ENCODE measurements at regions of chr4 and their contacts with region 1.

Region 1: GRCh38 chr4:81471588-81472288 is at the start of gene RASGEF1B:
- DNase-seq: peak; percentile 93
- H3K4me3 Mint-ChIP-seq: peak within 1 kb of the TSS; percentile 86
- H3K27ac Mint-ChIP-seq: peak within 1 kb of the TSS; percentile 91
- H3K4me1 Mint-ChIP-seq: peaks cover 31% of the 10 kb centered on the region
- H3K27me3 Mint-ChIP-seq: no peaks in the 10 kb centered on the region
- total RNA-seq, gene RASGEF1B: 6.5 to 6.7 TPM

Region 2: DNA sequence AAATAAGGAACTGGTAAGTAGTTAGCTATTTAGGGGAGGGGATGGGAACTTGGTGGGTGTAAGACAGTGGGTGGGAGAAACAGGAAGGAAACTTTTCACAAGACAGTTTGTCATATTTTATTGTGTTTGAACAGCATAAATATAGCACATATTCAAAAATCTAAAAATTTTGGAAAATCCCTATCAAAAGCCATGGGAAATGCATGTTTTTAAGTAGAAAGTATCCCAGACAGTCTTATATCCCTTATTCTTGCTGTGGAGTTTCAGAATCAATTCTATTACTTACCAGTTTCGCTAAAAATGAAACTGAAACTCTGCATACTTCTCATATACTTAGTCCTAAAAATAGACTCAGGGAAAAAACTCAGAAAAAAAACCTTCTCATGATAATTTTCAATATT is 22.3 kb after region 1 on chr4:
- CTCF ChIA-PET with region 1: interaction called, 6 read pairs
- intact Hi-C with region 1: loop called (anchors 1 kb)
- DNase-seq: no peak
- H3K4me3 Mint-ChIP-seq: no peak overlapping the region
- H3K27ac Mint-ChIP-seq: peak overlapping the region; percentile 30
- H3K4me1 Mint-ChIP-seq: peaks cover 46% of the 10 kb centered on the region
- H3K27me3 Mint-ChIP-seq: no peaks in the 10 kb centered on the region

Region 3: GRCh38 chr4:81589262-81589661 is 117.5 kb after region 1 on chr4:
- CTCF ChIA-PET with region 1: no interaction called
- intact Hi-C with region 1: loop called (anchors 2 kb)
- DNase-seq: no peak
- H3K4me3 Mint-ChIP-seq: no peak overlapping the region
- H3K27ac Mint-ChIP-seq: no peak overlapping the region
- H3K4me1 Mint-ChIP-seq: peaks cover 19% of the 10 kb centered on the region
- H3K27me3 Mint-ChIP-seq: no peaks in the 10 kb centered on the region

Region 4: DNA sequence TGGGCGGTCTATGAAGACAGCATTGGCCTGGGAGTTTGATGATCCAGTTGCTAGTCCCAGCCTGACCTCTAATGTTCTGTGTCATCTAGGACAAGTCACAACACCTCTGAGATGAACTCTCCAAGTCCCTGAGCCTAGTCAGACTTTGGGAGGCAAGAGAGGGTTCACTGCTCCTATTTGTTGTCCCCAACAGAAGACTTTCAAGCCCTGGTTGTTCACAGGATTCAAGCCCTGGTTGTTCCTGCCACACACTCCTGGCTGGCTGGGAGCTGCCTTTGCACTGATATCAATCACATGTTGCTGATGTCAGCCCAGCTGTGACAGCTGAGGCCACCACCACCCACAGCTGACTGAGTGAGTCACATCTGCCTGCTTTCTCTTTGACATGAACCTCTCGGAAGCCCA is 253.2 kb after region 1 on chr4:
- CTCF ChIA-PET with region 1: interaction called, 3 read pairs
- intact Hi-C with region 1: loop called (anchors 2 kb)
- DNase-seq: peak; percentile 78
- H3K4me3 Mint-ChIP-seq: no peak overlapping the region
- H3K27ac Mint-ChIP-seq: no peak overlapping the region
- H3K4me1 Mint-ChIP-seq: peaks cover 14% of the 10 kb centered on the region
- H3K27me3 Mint-ChIP-seq: no peaks in the 10 kb centered on the region

Region 5: DNA sequence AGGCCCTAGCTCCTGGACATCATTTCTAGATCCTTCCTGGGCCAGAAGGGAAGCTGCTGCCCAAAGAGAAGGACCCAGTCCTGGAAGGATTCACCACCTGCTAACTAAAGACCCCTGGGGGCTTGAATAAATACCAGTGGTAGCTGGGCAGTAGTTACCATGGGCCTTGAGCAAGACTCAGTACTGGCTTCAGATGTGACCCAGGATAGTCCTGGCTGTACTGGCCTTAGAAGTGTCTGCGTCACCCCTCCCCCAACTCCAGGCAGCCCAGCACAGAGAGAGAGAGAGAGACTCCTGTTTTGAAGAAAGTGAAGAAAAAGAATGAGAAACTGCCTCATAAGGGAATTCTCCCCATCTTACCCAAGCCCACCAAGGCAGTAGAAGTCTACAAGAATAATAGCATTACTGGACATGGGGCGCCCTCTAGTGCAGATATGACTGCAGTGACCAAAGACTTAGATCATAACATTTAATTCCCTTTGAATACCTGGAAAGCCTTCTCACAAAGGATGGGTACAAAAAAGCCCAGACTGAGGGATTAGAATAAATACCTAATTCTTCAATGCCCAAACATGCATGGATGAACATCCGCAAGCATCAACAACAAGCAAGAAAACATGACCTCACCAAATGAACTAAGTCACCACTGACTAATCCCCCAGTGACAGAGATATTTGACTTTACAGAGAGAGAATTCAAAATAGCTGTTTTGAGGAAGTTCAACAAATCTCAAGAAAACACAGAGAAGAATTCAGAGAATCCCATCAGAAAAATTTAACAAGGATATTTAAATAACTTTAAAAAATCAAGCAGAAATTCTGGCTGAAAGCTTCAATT is 730.3 kb after region 1 on chr4:
- CTCF ChIA-PET with region 1: interaction called, 5 read pairs
- intact Hi-C with region 1: loop called (anchors 1 kb)
- DNase-seq: peak; percentile 77
- H3K4me3 Mint-ChIP-seq: no peak overlapping the region
- H3K27ac Mint-ChIP-seq: no peak overlapping the region
- H3K4me1 Mint-ChIP-seq: no peaks in the 10 kb centered on the region
- H3K27me3 Mint-ChIP-seq: no peaks in the 10 kb centered on the region

Region 6: DNA sequence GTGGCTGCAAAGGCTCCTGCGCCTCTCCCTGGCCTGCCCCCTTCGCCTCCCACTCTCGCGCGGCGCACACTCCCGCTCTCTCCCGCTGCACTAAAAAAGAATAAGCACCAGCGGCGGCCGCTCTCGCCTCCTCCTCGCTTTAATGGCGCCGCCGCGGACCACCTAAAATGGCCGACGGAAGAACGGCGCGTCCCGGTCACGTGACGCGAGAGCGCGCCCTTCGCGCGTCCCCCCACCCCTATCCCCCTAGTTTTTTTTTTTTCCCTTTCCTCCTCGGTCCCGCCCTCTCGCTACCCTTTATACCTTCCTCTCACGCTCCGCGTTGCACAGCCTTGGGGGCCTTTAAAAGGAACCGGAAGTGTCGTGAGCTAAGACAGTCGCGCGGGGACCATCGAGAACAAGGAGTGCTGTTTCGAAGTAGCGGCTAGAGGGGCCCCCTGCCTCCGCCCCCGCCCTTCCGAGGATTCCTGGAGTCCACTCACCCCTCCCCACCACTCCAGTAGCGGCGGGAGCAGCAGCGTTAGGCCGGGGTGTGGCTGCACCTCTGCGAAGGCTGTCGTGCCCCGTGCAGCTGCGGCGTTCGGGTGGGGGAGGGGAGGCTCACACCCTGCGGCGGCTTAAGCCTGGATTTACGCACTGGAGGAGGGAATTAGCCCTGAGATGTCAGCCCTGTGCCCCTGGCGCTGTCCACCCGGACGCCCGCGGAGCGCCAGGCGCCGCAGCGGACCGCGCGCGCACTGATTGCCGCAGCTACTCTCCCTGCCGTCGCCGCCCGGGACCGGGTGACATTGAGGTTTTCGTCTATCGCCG is 902.3 kb after region 1 on chr4 and contains the start of gene HNRNPD:
- CTCF ChIA-PET with region 1: no interaction called
- intact Hi-C with region 1: loop called (anchors 5 kb)
- DNase-seq: peak; percentile 96
- H3K4me3 Mint-ChIP-seq: peak within 1 kb of the TSS; percentile 95
- H3K27ac Mint-ChIP-seq: peak within 1 kb of the TSS; percentile 95
- H3K4me1 Mint-ChIP-seq: peaks cover 33% of the 10 kb centered on the region
- H3K27me3 Mint-ChIP-seq: no peaks in the 10 kb centered on the region
- total RNA-seq, gene HNRNPD: 340 to 367 TPM

Measured in activated naive CD4-positive, alpha-beta T cell treated with anti-CD3 and anti-CD28 coated beads for 36 hours (primary cell).